A673 (cell line): ENCODE measurements at regions of chr13 and their contacts with region 1.

Region 1: DNA sequence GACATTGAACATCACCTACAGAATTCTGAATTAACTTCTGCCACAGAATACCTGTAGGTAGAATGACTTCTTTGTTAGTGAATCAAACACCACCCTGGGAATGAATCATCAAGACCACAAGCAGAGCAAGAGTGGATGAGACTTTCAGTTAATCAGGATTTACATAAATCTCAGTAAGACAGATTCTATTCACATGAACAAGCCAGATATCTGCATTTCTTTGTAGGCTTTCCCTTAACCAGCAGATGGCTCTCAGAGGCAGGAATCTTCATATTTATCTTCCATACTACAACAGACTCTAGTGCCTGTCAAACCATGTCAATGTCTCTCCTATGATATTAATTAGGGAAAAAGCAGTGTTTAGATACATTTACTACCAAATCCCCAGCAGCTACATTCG is 412.1 kb downstream of the KLF12 start:
- DNase-seq: peak; percentile 84
- H3K4me3 ChIP-seq: no peak overlapping the region
- H3K27ac ChIP-seq: no peak overlapping the region
- H3K4me1 ChIP-seq: peaks cover 15% of the 10 kb centered on the region
- H3K27me3 ChIP-seq: no peaks in the 10 kb centered on the region
- CTCF ChIP-seq: peak; percentile 65

Region 2: GRCh38 chr13:75219479-75220237 is 1497.5 kb after region 1 on chr13:
- CTCF ChIA-PET with region 1: interaction called, 3 read pairs
- POLR2A ChIA-PET with region 1: no interaction called
- intact Hi-C with region 1: loop called (anchors 1 kb)
- DNase-seq: peak; percentile 82
- H3K4me3 ChIP-seq: peak overlapping the region; percentile 28
- H3K27ac ChIP-seq: no peak overlapping the region
- H3K4me1 ChIP-seq: no peaks in the 10 kb centered on the region
- H3K27me3 ChIP-seq: no peaks in the 10 kb centered on the region
- CTCF ChIP-seq: peak; percentile 99

Region 3: DNA sequence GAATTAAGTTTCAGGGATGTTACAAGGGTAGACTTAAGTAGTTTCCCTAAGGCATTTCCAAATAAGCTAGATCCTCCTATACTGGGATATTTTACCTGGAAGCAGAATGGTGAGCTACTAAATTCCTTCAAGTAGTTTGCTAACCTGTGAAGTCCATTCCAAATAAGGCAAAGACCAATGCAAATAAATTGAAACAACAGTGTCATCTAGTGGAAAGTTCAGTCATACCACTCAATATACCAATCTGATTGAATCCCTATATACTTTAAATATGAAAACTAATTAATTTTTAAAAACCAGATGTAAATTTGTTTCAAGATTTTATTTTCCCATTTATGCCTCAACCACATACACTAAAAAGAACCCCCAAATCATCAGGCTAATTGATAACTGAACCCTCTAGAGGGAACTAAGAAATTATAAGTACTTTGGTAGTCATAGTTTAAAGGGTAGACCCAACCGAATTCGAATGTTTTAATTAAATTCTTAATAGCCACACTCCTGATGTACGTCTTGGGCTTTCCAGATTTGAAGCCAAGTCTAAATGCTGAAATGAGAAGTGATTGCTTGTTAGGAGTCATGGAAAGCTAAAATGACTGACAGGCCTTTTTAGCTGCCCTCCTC is 1536.2 kb after region 1 on chr13:
- CTCF ChIA-PET with region 1: no interaction called
- POLR2A ChIA-PET with region 1: no interaction called
- intact Hi-C with region 1: loop called (anchors 10 kb)
- DNase-seq: peak; percentile 55
- H3K4me3 ChIP-seq: no peak overlapping the region
- H3K27ac ChIP-seq: no peak overlapping the region
- H3K4me1 ChIP-seq: peaks cover 5% of the 10 kb centered on the region
- H3K27me3 ChIP-seq: no peaks in the 10 kb centered on the region
- CTCF ChIP-seq: peak; percentile 73